Heart right ventricle (tissue), 16 donors: ENCODE measurements at regions of chr6 and their contacts with region 1.

Region 1: GRCh38 chr6:10434692-10435376 is 20.0 kb upstream of the TFAP2A start:
- DNase-seq: no peak
- ATAC-seq: no peak
- H3K4me3 ChIP-seq: no peak overlapping the region
- H3K27ac ChIP-seq: no peak overlapping the region
- H3K4me1 ChIP-seq: no peaks in the 10 kb centered on the region
- H3K27me3 ChIP-seq: peaks cover 0 to 37% (median 21%) of the 10 kb centered on the region in 7 donors
- CTCF ChIP-seq: peak; percentile 26 to 75 (median 60)

Region 2: DNA sequence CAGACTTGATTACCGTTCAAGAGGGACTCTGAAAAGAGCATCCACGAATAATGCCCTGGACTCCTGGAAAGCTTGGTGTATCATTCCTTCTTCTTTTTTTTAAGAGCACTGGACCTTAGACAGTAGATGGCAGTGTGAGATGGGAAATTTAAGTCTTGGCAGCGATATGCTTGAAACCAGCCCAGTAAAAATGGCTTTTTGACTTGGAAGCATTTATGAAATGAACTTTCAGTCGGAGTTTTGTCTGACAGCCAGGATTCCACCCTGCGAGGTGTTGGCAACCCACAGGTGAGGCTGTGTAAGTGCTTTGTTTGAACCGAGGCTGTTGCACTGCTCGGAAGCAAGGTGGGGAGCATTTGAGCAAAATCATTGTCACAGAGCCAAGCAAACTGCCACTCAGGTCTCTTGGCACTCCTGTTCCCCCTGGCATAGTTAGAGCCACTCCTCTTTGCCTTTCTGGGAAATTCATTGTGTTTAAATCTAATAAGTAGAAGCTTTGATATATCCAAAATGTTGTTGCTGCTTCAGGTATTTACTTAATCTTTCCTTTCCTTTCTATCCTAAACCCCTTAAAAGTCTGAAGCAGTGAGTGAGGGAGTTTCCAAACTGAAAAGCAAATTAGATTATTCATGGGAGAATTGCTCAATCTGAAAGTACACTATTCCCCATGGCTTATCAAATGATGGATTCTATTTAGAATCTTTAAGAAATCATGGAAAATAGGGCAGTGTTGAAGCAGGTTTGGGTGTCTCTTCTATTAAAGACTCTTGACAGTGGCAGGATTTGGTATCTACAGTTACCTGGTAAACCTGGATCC is 1726.7 kb before region 1 on chr6:
- intact Hi-C with region 1: loop called in 2 of 10 experiments (anchors 5 to 10 kb)
- DNase-seq: no peak
- ATAC-seq: peak in 4 of 8 donors; percentile 46 to 71 (median 56)
- H3K4me3 ChIP-seq: peak overlapping the region in 6 of 10 donors; percentile 8 to 45 (median 27)
- H3K27ac ChIP-seq: no peak overlapping the region
- H3K4me1 ChIP-seq: peaks cover 0 to 4% (median 0%) of the 10 kb centered on the region in 9 donors
- H3K27me3 ChIP-seq: no peaks in the 10 kb centered on the region
- CTCF ChIP-seq: peak in 7 of 9 donors; percentile 34 to 53 (median 38)

Region 3: GRCh38 chr6:8983188-8983688 is 1451.6 kb before region 1 on chr6:
- intact Hi-C with region 1: loop called (anchors 5 to 10 kb)
- DNase-seq: peak; percentile 29 to 31
- ATAC-seq: peak in 6 of 8 donors; percentile 67 to 76 (median 70)
- H3K4me3 ChIP-seq: no peak overlapping the region
- H3K27ac ChIP-seq: no peak overlapping the region
- H3K4me1 ChIP-seq: peaks cover 0 to 7% (median 0%) of the 10 kb centered on the region in 9 donors
- H3K27me3 ChIP-seq: peaks cover 0 to 30% (median 4%) of the 10 kb centered on the region in 7 donors
- CTCF ChIP-seq: peak; percentile 55 to 96 (median 91)

Region 4: GRCh38 chr6:9540534-9541126 is 894.2 kb before region 1 on chr6:
- intact Hi-C with region 1: loop called in 5 of 10 experiments (anchors 5 to 10 kb)
- DNase-seq: no peak
- ATAC-seq: no peak
- H3K4me3 ChIP-seq: no peak overlapping the region
- H3K27ac ChIP-seq: no peak overlapping the region
- H3K4me1 ChIP-seq: no peaks in the 10 kb centered on the region
- H3K27me3 ChIP-seq: peaks cover 0 to 3% (median 0%) of the 10 kb centered on the region in 7 donors
- CTCF ChIP-seq: peak; percentile 22 to 64 (median 51)

Region 5: DNA sequence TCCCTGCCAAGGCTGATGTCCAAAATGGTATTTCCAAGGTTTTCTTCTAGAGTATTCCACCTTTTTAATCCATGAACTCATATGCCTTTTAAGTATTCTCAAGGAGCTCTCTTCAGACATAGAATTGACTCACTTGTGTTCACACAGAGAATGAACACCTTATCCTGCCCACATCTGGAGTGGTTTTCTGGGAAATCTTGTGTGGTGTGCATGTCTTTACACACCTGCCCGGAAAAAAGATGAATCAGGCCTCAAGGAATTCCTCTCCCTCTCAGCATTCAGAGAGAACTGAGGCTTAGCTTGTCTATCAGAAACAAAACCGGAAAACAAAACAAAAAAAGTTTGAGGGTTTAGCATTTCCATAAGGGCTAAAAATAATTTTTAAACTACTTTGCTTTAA is 168.8 kb before region 1 on chr6:
- intact Hi-C with region 1: no loop called
- DNase-seq: no peak
- ATAC-seq: no peak
- H3K4me3 ChIP-seq: no peak overlapping the region
- H3K27ac ChIP-seq: no peak overlapping the region
- H3K4me1 ChIP-seq: no peaks in the 10 kb centered on the region
- H3K27me3 ChIP-seq: peaks cover 0 to 28% (median 11%) of the 10 kb centered on the region in 7 donors
- CTCF ChIP-seq: no peak